ENCODE measurements at regions of chr7 and their contacts with region 1.

Region 1: DNA sequence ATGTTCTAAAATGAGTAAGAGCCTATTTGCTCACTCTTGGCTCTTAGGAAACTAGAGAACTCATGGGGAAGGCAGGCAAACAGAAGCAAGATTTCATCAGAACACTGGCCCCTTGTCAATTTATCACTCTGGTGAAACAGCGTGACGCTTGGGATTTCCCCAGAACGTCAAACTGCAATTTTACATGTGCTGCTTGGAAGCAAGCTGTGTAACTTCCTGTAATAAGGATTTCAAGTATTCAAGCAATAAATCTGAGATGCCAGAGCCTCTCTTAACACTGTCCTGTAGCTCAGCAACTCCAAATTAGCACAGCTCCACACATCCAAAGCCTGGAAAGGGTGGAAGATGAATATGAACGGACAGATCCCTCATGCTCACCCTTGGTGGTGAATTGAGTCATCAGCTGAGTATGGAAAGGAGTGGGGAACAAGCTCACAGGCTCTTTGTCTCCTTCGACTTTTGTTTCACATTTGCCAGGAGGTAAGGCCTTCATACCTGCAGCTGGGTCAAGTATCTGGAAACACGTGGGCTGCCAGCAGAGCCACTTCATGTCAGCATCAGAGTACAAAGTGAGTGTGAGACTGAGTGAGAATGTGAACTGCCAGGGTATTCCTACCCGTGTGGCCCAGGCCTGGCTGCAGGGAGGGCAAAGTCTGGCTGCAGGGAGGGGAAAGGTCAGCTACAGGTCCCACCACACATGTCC is 140.4 kb upstream of the NAMPT start:
- DNase-seq: peak; percentile 96
- H3K4me3 Mint-ChIP-seq: peak overlapping the region; percentile 80
- H3K27ac Mint-ChIP-seq: peak overlapping the region; percentile 99
- H3K4me1 Mint-ChIP-seq: peaks cover 86% of the 10 kb centered on the region
- H3K27me3 Mint-ChIP-seq: peaks cover 3% of the 10 kb centered on the region

Region 2: DNA sequence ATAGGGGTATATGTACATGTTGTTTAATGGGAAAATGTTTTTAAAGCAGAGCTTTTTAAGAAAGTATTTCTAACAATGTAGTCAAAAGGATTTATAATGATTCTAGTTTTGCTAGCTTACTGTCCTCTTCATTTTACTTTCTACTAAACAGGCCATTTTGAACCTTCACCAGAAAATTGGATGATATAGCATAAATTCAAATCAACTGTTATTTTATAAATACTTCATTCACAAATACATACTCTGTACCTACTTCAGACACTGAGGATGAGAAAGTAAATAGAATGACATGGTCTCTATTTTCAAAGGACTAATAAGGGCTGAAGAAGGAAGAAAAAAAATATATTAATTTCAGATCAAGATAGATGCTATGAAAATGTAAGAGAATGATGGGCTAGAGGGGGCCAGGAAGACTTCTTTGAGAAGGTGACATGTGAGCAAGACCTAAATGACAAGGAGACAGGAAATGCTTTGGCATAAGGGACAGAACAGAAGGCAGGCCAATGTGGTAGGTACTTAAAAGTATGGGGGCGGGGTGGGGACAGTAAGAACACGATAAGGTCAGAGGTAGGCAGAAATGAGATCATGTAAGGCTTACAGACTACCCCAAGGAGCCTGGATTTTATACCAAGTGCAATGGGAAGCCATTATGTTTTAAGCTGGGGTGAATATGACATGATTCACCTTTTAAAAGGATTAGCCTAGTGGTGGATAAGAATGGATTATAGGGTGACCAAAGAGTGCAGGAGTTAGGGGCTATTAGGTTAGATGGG is 145.6 kb before region 1 on chr7:
- CTCF ChIA-PET with region 1: no interaction called
- intact Hi-C with region 1: loop called (anchors 1 kb)
- DNase-seq: peak; percentile 68
- H3K4me3 Mint-ChIP-seq: peak overlapping the region; percentile 92
- H3K27ac Mint-ChIP-seq: peak overlapping the region; percentile 98
- H3K4me1 Mint-ChIP-seq: peaks cover 56% of the 10 kb centered on the region
- H3K27me3 Mint-ChIP-seq: no peaks in the 10 kb centered on the region

Region 3: DNA sequence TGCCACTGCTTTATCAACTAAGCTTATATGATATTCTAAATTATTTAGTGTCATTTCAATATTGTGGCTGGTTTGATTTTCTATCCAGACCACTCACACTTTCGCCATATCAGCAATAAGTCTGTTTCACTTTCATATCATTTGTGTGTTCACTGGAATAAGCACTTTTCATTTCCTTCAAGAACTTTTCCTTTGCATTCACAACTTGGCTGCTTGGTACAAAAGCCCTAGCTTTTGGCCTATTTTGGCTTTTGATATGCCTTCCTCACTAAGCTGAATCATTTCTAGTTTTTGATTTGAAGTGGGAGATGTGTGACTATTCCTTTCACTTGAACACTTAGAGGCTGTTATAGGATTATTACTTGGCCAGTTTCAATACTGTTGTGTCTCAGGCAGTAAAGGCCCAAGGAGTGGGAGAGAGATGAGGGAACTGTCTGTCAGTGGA is 19.4 kb before region 1 on chr7:
- CTCF ChIA-PET with region 1: interaction called, 5 read pairs
- intact Hi-C with region 1: loop called (anchors 1 kb)
- DNase-seq: peak; percentile 53
- H3K4me3 Mint-ChIP-seq: no peak overlapping the region
- H3K27ac Mint-ChIP-seq: peak overlapping the region; percentile 50
- H3K4me1 Mint-ChIP-seq: peaks cover 32% of the 10 kb centered on the region
- H3K27me3 Mint-ChIP-seq: peaks cover 44% of the 10 kb centered on the region

Region 4: GRCh38 chr7:106461993-106462859 is 37.1 kb after region 1 on chr7:
- CTCF ChIA-PET with region 1: interaction called, 13 read pairs
- intact Hi-C with region 1: loop called (anchors 1 kb)
- DNase-seq: peak; percentile 29
- H3K4me3 Mint-ChIP-seq: no peak overlapping the region
- H3K27ac Mint-ChIP-seq: peak overlapping the region; percentile 50
- H3K4me1 Mint-ChIP-seq: peaks cover 29% of the 10 kb centered on the region
- H3K27me3 Mint-ChIP-seq: no peaks in the 10 kb centered on the region

Region 5: GRCh38 chr7:106717955-106718871 is 293.0 kb after region 1 on chr7:
- CTCF ChIA-PET with region 1: no interaction called
- intact Hi-C with region 1: loop called (anchors 1 kb)
- DNase-seq: peak; percentile 92
- H3K4me3 Mint-ChIP-seq: no peak overlapping the region
- H3K27ac Mint-ChIP-seq: no peak overlapping the region
- H3K4me1 Mint-ChIP-seq: peaks cover 10% of the 10 kb centered on the region
- H3K27me3 Mint-ChIP-seq: no peaks in the 10 kb centered on the region

Region 6: GRCh38 chr7:107480932-107481331 is 1055.8 kb after region 1 on chr7:
- CTCF ChIA-PET with region 1: no interaction called
- intact Hi-C with region 1: no loop called
- DNase-seq: no peak
- H3K4me3 Mint-ChIP-seq: no peak overlapping the region
- H3K27ac Mint-ChIP-seq: no peak overlapping the region
- H3K4me1 Mint-ChIP-seq: peaks cover 5% of the 10 kb centered on the region
- H3K27me3 Mint-ChIP-seq: no peaks in the 10 kb centered on the region

Measured in activated naive CD4-positive, alpha-beta T cell treated with anti-CD3 and anti-CD28 coated beads for 36 hours (primary cell).